ENCODE measurements at regions of chr15 and their contacts with region 1.

Region 1: GRCh38 chr15:65516997-65517865 is at the start of gene DPP8:
- DNase-seq: peak; percentile 93 to 97 (median 94)
- ATAC-seq: peak; percentile 90
- H3K4me3 ChIP-seq: peak within 1 kb of the TSS; percentile 98 to 99
- H3K4me3 Mint-ChIP-seq: peak within 1 kb of the TSS; percentile 96
- H3K27ac ChIP-seq: peak within 1 kb of the TSS; percentile 72 to 93
- H3K27ac Mint-ChIP-seq: peak within 1 kb of the TSS; percentile 96
- H3K4me1 ChIP-seq: peaks cover 32% of the 10 kb centered on the region
- H3K4me1 Mint-ChIP-seq: peaks cover 49% of the 10 kb centered on the region
- H3K27me3 ChIP-seq: no peaks in the 10 kb centered on the region
- H3K27me3 Mint-ChIP-seq: no peaks in the 10 kb centered on the region
- CTCF ChIP-seq: peak; percentile 82
- total RNA-seq, gene DPP8: 30.5 to 38.1 TPM

Region 2: GRCh38 chr15:65133548-65134200 is 383.6 kb before region 1 on chr15 and contains the start of gene PDCD7:
- CTCF ChIA-PET with region 1: no interaction called
- POLR2A ChIA-PET with region 1: no interaction called
- intact Hi-C with region 1: loop called in 1 of 2 experiments (anchors 1 kb)
- DNase-seq: peak; percentile 60 to 95 (median 86)
- ATAC-seq: peak; percentile 93
- H3K4me3 ChIP-seq: peak within 1 kb of the TSS; percentile 62 to 78
- H3K4me3 Mint-ChIP-seq: peak within 1 kb of the TSS; percentile 91
- H3K27ac ChIP-seq: peak within 1 kb of the TSS; percentile 80 to 83
- H3K27ac Mint-ChIP-seq: peak within 1 kb of the TSS; percentile 96
- H3K4me1 ChIP-seq: peaks cover 26% of the 10 kb centered on the region
- H3K4me1 Mint-ChIP-seq: peaks cover 31% of the 10 kb centered on the region
- H3K27me3 ChIP-seq: no peaks in the 10 kb centered on the region
- H3K27me3 Mint-ChIP-seq: no peaks in the 10 kb centered on the region
- CTCF ChIP-seq: no peak
- total RNA-seq, gene PDCD7: 20.7 to 21.7 TPM

Region 3: DNA sequence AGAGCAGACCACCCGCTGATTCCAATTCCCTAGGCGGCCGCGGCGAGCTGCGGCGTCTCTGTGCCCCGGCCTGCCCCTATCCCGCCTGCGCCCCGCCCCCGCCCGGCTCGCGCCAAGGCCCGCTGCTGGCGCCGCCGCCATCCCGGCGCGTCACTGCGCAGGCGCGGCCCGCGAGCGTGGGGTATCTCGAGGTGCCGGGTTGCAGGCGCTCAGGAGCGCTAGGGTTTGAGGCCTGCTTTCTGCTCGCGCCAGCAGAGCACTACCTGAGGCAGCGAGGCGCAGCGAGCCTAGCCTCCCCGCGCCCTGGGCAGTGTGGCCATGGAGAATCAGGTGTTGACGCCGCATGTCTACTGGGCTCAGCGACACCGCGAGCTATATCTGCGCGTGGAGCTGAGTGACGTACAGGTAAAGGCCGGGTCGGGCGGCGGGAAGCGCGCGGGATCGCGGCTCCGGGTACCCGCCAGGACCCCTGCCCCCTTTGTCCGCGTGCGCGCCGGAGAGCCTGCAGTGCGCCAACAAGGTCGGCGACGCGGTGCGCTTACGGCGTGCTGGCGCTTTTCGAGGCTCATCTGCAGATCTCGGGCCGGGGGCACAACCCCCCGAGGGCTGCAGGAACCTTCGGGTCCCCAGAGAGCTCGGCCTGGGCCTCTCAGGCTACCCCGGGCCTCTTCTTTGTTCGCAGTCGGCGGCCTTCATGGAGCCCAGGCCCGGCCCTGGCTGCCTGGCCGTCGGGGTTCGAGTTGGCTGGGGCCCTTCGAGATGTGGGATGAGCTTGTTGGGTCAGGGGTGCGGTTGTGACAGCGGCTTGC is 13.3 kb after region 1 on chr15 and contains the start of gene HACD3:
- CTCF ChIA-PET with region 1: interaction called, 4 read pairs
- POLR2A ChIA-PET with region 1: interaction called, 10 read pairs
- intact Hi-C with region 1: no loop called
- DNase-seq: peak; percentile 75 to 93 (median 88)
- ATAC-seq: peak; percentile 96
- H3K4me3 ChIP-seq: peak within 1 kb of the TSS; percentile 67 to 97
- H3K4me3 Mint-ChIP-seq: peak within 1 kb of the TSS; percentile 88
- H3K27ac ChIP-seq: peak within 1 kb of the TSS; percentile 68 to 76
- H3K27ac Mint-ChIP-seq: peak within 1 kb of the TSS; percentile 91
- H3K4me1 ChIP-seq: peaks cover 20% of the 10 kb centered on the region
- H3K4me1 Mint-ChIP-seq: peaks cover 39% of the 10 kb centered on the region
- H3K27me3 ChIP-seq: no peaks in the 10 kb centered on the region
- H3K27me3 Mint-ChIP-seq: no peaks in the 10 kb centered on the region
- CTCF ChIP-seq: no peak
- total RNA-seq, gene HACD3: 16.8 to 17.0 TPM

Region 4: GRCh38 chr15:65610871-65611718 is 93.9 kb after region 1 on chr15 and contains the start of gene INTS14:
- CTCF ChIA-PET with region 1: no interaction called
- POLR2A ChIA-PET with region 1: no interaction called
- intact Hi-C with region 1: loop called (anchors 1 kb)
- DNase-seq: peak; percentile 81 to 95 (median 92)
- ATAC-seq: peak; percentile 95
- H3K4me3 ChIP-seq: peak within 1 kb of the TSS; percentile 85 to 96
- H3K4me3 Mint-ChIP-seq: peak within 1 kb of the TSS; percentile 97
- H3K27ac ChIP-seq: peak within 1 kb of the TSS; percentile 80 to 95
- H3K27ac Mint-ChIP-seq: peak within 1 kb of the TSS; percentile 98
- H3K4me1 ChIP-seq: peaks cover 17% of the 10 kb centered on the region
- H3K4me1 Mint-ChIP-seq: peaks cover 43% of the 10 kb centered on the region
- H3K27me3 ChIP-seq: no peaks in the 10 kb centered on the region
- H3K27me3 Mint-ChIP-seq: no peaks in the 10 kb centered on the region
- CTCF ChIP-seq: peak; percentile 26
- total RNA-seq, gene INTS14: 26.7 to 28.6 TPM

Region 5: DNA sequence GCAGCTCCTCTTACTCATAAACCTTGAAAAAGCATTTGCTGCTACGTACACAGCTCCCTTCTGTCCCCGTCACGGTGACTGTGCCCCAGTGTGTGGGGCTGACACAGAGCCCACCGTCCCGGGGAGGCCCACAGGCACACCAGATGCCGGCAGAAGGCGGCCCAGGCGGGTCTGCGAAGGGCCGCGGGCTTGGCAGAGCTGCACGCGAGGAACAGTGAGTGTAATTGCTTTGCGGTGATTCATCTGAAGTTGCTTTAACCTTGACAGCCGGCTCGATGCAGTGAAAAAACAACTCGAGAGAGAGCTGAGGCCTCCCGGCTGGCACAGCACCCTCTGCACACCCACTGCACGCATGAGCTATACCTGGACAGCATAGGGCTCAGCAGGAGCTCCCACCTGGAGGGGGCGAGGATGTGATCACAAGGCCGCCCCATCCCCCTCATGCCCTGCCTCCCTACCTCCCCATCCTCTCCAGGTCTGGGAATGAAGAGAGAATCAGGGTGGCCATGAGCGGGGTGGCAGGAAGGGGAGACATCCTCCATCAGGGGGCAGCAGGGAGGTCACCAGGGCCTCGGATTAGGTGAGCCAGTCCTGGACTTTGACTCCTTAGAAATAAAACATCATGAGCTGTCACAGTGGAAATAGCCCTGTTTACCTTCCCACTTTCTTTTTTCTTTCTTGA is 563.6 kb after region 1 on chr15:
- CTCF ChIA-PET with region 1: no interaction called
- POLR2A ChIA-PET with region 1: no interaction called
- intact Hi-C with region 1: no loop called
- DNase-seq: no peak
- ATAC-seq: no peak
- H3K4me3 ChIP-seq: no peak overlapping the region
- H3K4me3 Mint-ChIP-seq: no peak overlapping the region
- H3K27ac ChIP-seq: no peak overlapping the region
- H3K27ac Mint-ChIP-seq: no peak overlapping the region
- H3K4me1 ChIP-seq: no peaks in the 10 kb centered on the region
- H3K4me1 Mint-ChIP-seq: no peaks in the 10 kb centered on the region
- H3K27me3 ChIP-seq: no peaks in the 10 kb centered on the region
- H3K27me3 Mint-ChIP-seq: peaks cover 35% of the 10 kb centered on the region
- CTCF ChIP-seq: no peak

Measured in CD8-positive, alpha-beta T cell (primary cell).